Activated CD8-positive, alpha-beta memory T cell treated with anti-CD3 and anti-CD28 coated beads, Interleukin-2, amount 10 ng/mL, durations not matched to agents 7 days and 5 days (primary cell): ENCODE measurements at regions of chr17 and their contacts with region 1.

Region 1: GRCh38 chr17:31437720-31438420 is 46.4 kb downstream of the RAB11FIP4 start:
- DNase-seq: no peak
- ATAC-seq: no peak
- H3K4me3 Mint-ChIP-seq: no peak overlapping the region
- H3K27ac Mint-ChIP-seq: no peak overlapping the region
- H3K4me1 Mint-ChIP-seq: peaks cover 16% of the 10 kb centered on the region
- H3K27me3 Mint-ChIP-seq: peaks cover 9% of the 10 kb centered on the region

Region 2: GRCh38 chr17:31397256-31397939 is 40.5 kb before region 1 on chr17:
- CTCF ChIA-PET with region 1: no interaction called
- DNase-seq: no peak
- ATAC-seq: no peak
- H3K4me3 Mint-ChIP-seq: no peak overlapping the region
- H3K27ac Mint-ChIP-seq: no peak overlapping the region
- H3K4me1 Mint-ChIP-seq: peaks cover 4% of the 10 kb centered on the region
- H3K27me3 Mint-ChIP-seq: peaks cover 32% of the 10 kb centered on the region

Region 3: GRCh38 chr17:31413874-31414549 is 23.9 kb before region 1 on chr17:
- CTCF ChIA-PET with region 1: no interaction called
- DNase-seq: no peak
- ATAC-seq: no peak
- H3K4me3 Mint-ChIP-seq: no peak overlapping the region
- H3K27ac Mint-ChIP-seq: no peak overlapping the region
- H3K4me1 Mint-ChIP-seq: no peaks in the 10 kb centered on the region
- H3K27me3 Mint-ChIP-seq: peaks cover 3% of the 10 kb centered on the region

Region 4: GRCh38 chr17:31517524-31517923 is 79.7 kb after region 1 on chr17:
- CTCF ChIA-PET with region 1: interaction called, 15 read pairs
- DNase-seq: no peak
- ATAC-seq: no peak
- H3K4me3 Mint-ChIP-seq: no peak overlapping the region
- H3K27ac Mint-ChIP-seq: no peak overlapping the region
- H3K4me1 Mint-ChIP-seq: peaks cover 18% of the 10 kb centered on the region
- H3K27me3 Mint-ChIP-seq: no peaks in the 10 kb centered on the region

Region 5: GRCh38 chr17:31524926-31525800 is 87.3 kb after region 1 on chr17:
- CTCF ChIA-PET with region 1: interaction called, 28 read pairs
- DNase-seq: peak; percentile 87
- ATAC-seq: peak; percentile 85
- H3K4me3 Mint-ChIP-seq: no peak overlapping the region
- H3K27ac Mint-ChIP-seq: no peak overlapping the region
- H3K4me1 Mint-ChIP-seq: peaks cover 1% of the 10 kb centered on the region
- H3K27me3 Mint-ChIP-seq: no peaks in the 10 kb centered on the region

Region 6: GRCh38 chr17:31533546-31534155 is 95.8 kb after region 1 on chr17:
- CTCF ChIA-PET with region 1: interaction called, 12 read pairs
- DNase-seq: no peak
- ATAC-seq: no peak
- H3K4me3 Mint-ChIP-seq: no peak overlapping the region
- H3K27ac Mint-ChIP-seq: no peak overlapping the region
- H3K4me1 Mint-ChIP-seq: peaks cover 8% of the 10 kb centered on the region
- H3K27me3 Mint-ChIP-seq: no peaks in the 10 kb centered on the region

Region 7: GRCh38 chr17:31629696-31630470 is 192.0 kb after region 1 on chr17:
- CTCF ChIA-PET with region 1: no interaction called
- DNase-seq: no peak
- ATAC-seq: no peak
- H3K4me3 Mint-ChIP-seq: no peak overlapping the region
- H3K27ac Mint-ChIP-seq: no peak overlapping the region
- H3K4me1 Mint-ChIP-seq: no peaks in the 10 kb centered on the region
- H3K27me3 Mint-ChIP-seq: peaks cover 34% of the 10 kb centered on the region